ENCODE measurements at regions of chr1 and their contacts with region 1.

Region 1: GRCh38 chr1:152182431-152182830 is 23.4 kb upstream of the RPTN start:
- DNase-seq: no peak
- ATAC-seq: peak in 2 of 4 donors; percentile 47 to 51
- H3K4me3 ChIP-seq: no peak overlapping the region
- H3K27ac ChIP-seq: no peak overlapping the region
- H3K4me1 ChIP-seq: no peaks in the 10 kb centered on the region
- H3K27me3 ChIP-seq: no peaks in the 10 kb centered on the region
- CTCF ChIP-seq: no peak

Region 2: GRCh38 chr1:151898513-151898991 is 283.9 kb before region 1 on chr1:
- intact Hi-C with region 1: no loop called
- DNase-seq: peak in 1 of 6 donors; percentile 40
- ATAC-seq: no peak
- H3K4me3 ChIP-seq: no peak overlapping the region
- H3K27ac ChIP-seq: no peak overlapping the region
- H3K4me1 ChIP-seq: no peaks in the 10 kb centered on the region
- H3K27me3 ChIP-seq: no peaks in the 10 kb centered on the region
- CTCF ChIP-seq: no peak

Region 3: DNA sequence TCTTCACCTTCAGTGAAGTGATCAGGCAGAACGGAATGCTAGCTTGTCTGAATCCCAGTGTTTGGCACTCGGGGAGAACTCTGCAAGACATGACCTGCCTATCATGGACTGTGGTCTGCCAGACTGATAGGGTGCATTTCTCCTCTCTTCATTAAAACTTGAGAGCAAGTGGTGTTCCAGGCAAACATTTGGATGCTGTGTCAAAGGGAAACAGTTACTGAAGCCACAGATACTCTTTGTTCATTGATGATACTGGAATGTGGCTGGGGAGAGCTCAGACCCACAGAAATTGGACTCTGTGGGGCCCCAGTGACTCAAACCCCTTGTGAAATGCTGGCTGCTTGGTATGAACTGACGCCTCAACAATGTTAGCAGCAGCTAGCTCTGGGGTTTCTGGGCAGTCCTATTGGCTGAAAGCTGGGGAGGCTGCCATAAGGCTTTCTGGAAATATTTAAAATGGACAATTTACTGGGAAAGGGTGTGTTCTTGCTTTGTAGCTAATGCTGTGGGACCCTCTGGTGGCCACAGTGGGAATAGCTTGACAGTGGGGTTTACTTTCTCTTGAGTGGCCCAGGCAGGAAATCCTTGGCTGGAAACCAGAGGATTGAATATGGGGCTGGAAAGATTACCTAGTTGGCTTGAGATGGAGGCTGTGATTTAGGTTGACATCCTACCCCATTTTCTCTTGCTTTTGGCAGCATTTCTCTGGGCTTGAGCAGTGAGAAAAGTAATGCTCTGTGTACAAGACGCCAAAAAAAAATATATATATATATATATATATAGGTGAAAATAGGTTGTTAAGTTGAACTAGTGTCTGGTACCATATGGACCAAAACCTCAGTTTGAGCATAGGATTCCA is 180.8 kb before region 1 on chr1:
- intact Hi-C with region 1: no loop called
- DNase-seq: peak; percentile 73 to 90 (median 84)
- ATAC-seq: peak; percentile 78 to 91 (median 86)
- H3K4me3 ChIP-seq: no peak overlapping the region
- H3K27ac ChIP-seq: no peak overlapping the region
- H3K4me1 ChIP-seq: peaks cover 0 to 2% (median 0%) of the 10 kb centered on the region in 3 donors
- H3K27me3 ChIP-seq: peaks cover 0 to 4% (median 0%) of the 10 kb centered on the region in 4 donors
- CTCF ChIP-seq: peak; percentile 79 to 89 (median 84)

Region 4: DNA sequence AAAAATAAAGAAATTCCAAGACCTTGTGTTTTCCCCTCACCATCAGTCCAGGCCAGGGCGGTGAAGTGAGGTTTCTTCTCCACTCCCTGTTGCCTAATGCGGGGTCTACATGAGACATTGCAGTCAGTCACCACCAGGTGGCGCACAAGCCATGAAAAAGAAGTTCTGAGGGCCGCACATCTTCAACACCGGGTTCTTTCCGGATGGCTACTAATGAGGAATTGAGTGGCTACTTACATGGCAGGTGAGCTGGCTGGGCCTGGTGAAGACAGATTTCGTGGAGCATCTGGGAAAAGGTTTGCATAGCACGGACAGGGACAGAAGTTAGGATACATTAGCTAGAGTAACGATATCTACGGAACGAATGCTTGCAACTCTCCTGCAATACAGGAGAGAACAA is 129.8 kb before region 1 on chr1:
- intact Hi-C with region 1: loop called in 2 of 3 experiments (anchors 5 kb)
- DNase-seq: peak; percentile 67 to 95 (median 84)
- ATAC-seq: peak in 3 of 4 donors; percentile 43 to 63 (median 54)
- H3K4me3 ChIP-seq: no peak overlapping the region
- H3K27ac ChIP-seq: no peak overlapping the region
- H3K4me1 ChIP-seq: peaks cover 4 to 13% (median 11%) of the 10 kb centered on the region in 3 donors
- H3K27me3 ChIP-seq: no peaks in the 10 kb centered on the region
- CTCF ChIP-seq: peak; percentile 77 to 92 (median 86)

Region 5: DNA sequence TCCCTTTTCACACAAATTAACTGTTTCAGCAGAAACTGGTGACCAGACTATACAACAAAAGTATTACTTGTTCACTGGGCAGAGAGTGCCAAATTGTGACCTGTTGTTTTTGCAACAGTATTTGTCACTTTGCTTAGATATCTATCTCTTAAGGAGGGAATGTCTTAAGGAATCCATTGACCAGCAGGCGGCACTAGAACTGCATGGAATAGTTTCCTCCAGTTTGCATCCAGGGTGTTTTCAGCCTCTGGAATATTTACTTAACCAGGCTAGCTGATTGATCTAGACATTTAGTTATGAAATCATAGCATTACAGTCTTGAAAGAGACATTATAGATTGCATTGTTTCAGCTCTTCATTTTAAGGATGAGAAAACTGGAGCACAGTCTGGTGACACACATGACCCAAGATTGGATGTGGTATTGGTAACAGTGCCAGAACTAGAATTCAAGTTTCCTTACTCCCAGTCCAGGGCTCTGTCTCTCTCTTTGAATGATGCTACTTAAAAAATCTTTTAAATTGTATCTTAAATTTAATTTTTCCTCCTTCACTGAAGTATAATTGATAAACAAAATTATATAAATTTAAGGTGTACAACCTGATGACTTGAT is 40.4 kb before region 1 on chr1:
- intact Hi-C with region 1: loop called in 1 of 3 experiments (anchors 5 kb)
- DNase-seq: peak in 3 of 6 donors; percentile 13 to 61 (median 34)
- ATAC-seq: peak; percentile 64 to 90 (median 88)
- H3K4me3 ChIP-seq: no peak overlapping the region
- H3K27ac ChIP-seq: no peak overlapping the region
- H3K4me1 ChIP-seq: no peaks in the 10 kb centered on the region
- H3K27me3 ChIP-seq: peaks cover 0 to 4% (median 2%) of the 10 kb centered on the region in 4 donors
- CTCF ChIP-seq: peak in 3 of 4 donors; percentile 32 to 61 (median 44)